Calu3 (cell line): ENCODE measurements at regions of chr22 and their contacts with region 1.

Region 1: DNA sequence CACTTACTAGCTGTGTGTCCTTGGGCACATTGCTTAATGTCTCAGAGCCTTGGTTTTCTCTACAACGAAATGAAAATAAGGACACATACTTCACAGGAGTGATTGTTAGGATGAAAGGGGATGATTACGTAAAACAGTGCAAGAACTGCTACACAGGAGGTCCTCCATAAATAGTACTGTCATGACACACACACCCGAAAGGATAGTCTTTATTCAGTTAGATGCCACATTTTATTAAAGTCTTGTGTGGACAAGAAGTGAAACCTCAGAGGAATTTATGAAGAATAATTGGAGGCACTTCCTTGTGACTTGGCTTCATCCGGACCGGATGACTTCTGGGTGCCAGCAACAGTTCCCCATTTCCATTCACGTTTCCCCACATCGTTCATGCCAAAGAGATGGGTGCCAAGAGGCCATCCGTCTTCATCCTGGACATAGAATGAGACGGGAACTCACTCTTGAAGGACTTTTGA is 67.4 kb upstream of the ATXN10 start:
- DNase-seq: no peak
- H3K4me3 Mint-ChIP-seq: no peak overlapping the region
- H3K27ac Mint-ChIP-seq: peak overlapping the region; percentile 92
- H3K4me1 Mint-ChIP-seq: peaks cover 87% of the 10 kb centered on the region
- H3K27me3 Mint-ChIP-seq: no peaks in the 10 kb centered on the region
- CTCF ChIP-seq: no peak

Region 2: DNA sequence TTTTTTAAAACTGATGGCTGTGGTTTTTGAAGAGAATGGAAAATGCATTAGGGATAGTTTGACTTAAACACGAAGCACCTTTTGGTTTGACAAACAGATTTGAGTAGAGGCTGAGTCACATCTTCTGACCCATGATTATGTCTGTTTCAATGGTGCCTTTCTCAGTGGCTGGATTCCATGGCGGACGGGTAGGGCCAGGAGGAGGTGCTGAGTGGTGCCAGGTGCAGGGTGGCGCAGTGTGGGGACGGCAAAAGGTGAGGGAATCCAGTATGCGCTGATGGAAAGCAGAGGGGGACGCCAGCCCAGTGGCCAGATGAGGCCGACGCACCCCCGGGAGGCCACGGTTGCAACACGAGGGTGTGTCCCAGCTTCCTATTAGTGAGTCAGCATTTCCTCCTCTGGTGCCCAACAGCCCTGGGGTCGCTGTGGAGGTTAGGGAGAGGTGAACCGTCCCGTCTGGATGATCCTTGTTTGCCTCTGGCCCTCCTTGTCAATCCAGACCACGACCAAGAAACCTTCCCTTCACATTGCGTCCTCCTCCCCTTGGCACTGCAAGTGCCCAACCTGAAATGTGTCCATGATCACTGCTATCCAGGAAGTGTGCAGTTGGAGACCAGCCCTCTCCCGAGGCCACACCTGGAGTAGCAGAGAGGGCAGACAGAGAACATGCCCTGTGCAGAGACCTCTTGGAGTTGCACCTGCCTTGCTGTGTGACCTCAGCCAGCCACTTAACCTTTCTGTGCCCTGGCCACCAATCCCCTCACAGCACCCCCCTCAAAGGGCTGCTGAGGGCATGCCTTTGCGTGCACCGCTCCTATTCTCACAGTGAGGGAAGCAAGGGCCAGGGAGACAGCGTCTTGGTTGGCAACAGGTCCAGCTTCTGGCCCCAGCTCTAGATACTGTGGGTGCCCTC is 34.8 kb after region 1 on chr22:
- CTCF ChIA-PET with region 1: interaction called, 6 read pairs
- intact Hi-C with region 1: loop called (anchors 2 kb)
- DNase-seq: peak; percentile 94
- H3K4me3 Mint-ChIP-seq: peak overlapping the region; percentile 50
- H3K27ac Mint-ChIP-seq: peak overlapping the region; percentile 100
- H3K4me1 Mint-ChIP-seq: peaks cover 40% of the 10 kb centered on the region
- H3K27me3 Mint-ChIP-seq: no peaks in the 10 kb centered on the region
- CTCF ChIP-seq: no peak